Esophagus squamous epithelium (tissue), 5 donors: ENCODE measurements at regions of chr10 and their contacts with region 1.

Region 1: DNA sequence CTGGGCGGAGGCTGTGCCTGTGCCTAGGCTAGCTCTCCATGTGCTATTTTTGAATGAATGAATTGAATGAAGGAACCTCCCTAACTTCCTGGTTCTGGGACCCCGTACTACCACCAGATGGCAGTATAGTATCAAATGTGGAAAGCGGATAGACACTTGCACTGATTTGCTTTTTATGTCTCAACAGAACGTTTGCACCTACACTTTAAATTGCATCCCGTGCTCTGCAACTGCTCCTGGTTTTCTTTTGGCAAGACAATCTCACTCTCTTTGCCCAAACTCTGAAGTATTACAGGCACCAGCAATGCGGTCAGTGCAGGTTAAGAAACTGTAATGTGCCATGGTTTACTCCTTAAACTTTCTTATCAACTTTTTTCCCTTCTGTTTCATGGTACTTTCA is 6.5 kb downstream of the FZD8 start:
- DNase-seq: no peak
- H3K4me3 ChIP-seq: no peak overlapping the region
- H3K27ac ChIP-seq: no peak overlapping the region
- H3K4me1 ChIP-seq: peaks cover 5 to 18% (median 5%) of the 10 kb centered on the region in 3 donors
- H3K27me3 ChIP-seq: peaks cover 0 to 42% (median 0%) of the 10 kb centered on the region in 4 donors
- CTCF ChIP-seq: peak; percentile 67 to 89 (median 84)
- POLR2A ChIP-seq: no peak

Region 2: GRCh38 chr10:35533565-35533964 is 102.0 kb before region 1 on chr10:
- intact Hi-C with region 1: no loop called
- DNase-seq: no peak
- H3K4me3 ChIP-seq: no peak overlapping the region
- H3K27ac ChIP-seq: no peak overlapping the region
- H3K4me1 ChIP-seq: no peaks in the 10 kb centered on the region
- H3K27me3 ChIP-seq: no peaks in the 10 kb centered on the region
- CTCF ChIP-seq: no peak
- POLR2A ChIP-seq: no peak

Region 3: GRCh38 chr10:36779234-36779846 is 1143.8 kb after region 1 on chr10:
- intact Hi-C with region 1: loop called (anchors 10 kb)
- DNase-seq: no peak
- H3K4me3 ChIP-seq: no peak overlapping the region
- H3K27ac ChIP-seq: no peak overlapping the region
- H3K4me1 ChIP-seq: no peaks in the 10 kb centered on the region
- H3K27me3 ChIP-seq: no peaks in the 10 kb centered on the region
- CTCF ChIP-seq: peak in 5 of 6 experiments; percentile 28 to 64 (median 45)
- POLR2A ChIP-seq: no peak

Region 4: GRCh38 chr10:36888929-36889573 is 1253.5 kb after region 1 on chr10:
- intact Hi-C with region 1: loop called (anchors 10 kb)
- DNase-seq: no peak
- H3K4me3 ChIP-seq: no peak overlapping the region
- H3K27ac ChIP-seq: no peak overlapping the region
- H3K4me1 ChIP-seq: no peaks in the 10 kb centered on the region
- H3K27me3 ChIP-seq: no peaks in the 10 kb centered on the region
- CTCF ChIP-seq: no peak
- POLR2A ChIP-seq: no peak